ENCODE measurements at regions of chr7 and their contacts with region 1.

Region 1: DNA sequence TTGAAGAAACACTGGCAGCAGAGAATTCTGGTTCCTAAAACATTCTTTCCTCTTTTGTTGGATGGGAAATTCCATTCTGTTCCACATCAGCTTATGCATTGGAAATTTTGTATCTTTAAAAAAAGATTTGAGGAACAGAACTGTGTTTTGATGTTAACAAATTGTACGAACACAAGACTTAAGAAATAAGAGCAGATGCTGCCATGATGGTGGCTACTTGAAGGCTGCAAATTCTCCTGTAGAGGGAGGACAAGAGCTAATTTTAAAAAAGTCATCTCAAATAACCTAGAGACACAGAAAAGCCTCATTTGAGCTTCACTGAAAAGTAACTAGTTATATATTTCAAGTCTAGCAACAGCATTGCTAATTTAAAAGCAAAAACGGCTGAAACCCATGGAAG is 29.8 kb downstream of the NDUFB2 start:
- DNase-seq: no peak
- H3K4me3 Mint-ChIP-seq: no peak overlapping the region
- H3K27ac Mint-ChIP-seq: no peak overlapping the region
- H3K4me1 Mint-ChIP-seq: peaks cover 17% of the 10 kb centered on the region
- H3K27me3 Mint-ChIP-seq: no peaks in the 10 kb centered on the region

Region 2: DNA sequence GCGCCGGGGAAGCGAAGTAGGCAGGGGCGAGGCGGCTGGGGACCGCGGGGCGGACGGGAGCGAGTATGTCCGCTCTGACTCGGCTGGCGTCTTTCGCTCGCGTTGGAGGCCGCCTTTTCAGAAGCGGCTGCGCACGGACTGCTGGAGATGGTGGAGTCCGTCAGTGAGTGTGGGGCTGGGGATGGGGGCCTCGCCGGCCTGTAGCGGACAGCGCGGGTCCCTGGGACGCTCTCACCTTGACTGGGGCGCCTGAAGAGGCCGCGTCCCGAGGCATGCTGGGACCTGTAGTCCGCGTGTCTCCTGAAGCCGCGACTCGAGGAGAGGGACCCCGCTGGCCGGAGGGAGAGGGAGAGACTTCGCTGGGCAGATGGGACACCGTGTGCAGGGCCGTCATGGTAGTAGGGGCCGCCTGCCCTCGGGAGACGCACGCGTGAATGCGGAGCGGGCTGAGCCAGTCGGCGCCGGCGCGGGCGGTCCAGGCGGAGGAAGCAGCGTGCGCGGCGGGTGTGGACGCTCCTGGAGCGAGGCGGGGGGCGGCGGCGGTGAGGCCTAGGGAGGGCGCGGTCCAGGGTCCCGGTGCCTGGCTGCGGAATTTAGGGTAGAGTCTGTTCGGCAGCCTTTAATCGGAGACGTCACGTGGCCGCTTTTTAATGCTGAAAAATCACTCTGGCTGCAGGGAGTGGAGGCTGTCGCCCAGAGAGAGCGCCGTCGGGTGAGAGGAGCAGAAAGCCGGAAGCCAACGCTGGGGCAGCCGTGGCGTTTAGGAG is 29.4 kb before region 1 on chr7 and contains the start of gene NDUFB2:
- CTCF ChIA-PET with region 1: interaction called, 3 read pairs
- intact Hi-C with region 1: loop called (anchors 1 kb)
- DNase-seq: peak; percentile 75
- H3K4me3 Mint-ChIP-seq: peak within 1 kb of the TSS; percentile 98
- H3K27ac Mint-ChIP-seq: peak within 1 kb of the TSS; percentile 99
- H3K4me1 Mint-ChIP-seq: peaks cover 34% of the 10 kb centered on the region
- H3K27me3 Mint-ChIP-seq: no peaks in the 10 kb centered on the region
- total RNA-seq, gene NDUFB2: 167 to 179 TPM

Region 3: DNA sequence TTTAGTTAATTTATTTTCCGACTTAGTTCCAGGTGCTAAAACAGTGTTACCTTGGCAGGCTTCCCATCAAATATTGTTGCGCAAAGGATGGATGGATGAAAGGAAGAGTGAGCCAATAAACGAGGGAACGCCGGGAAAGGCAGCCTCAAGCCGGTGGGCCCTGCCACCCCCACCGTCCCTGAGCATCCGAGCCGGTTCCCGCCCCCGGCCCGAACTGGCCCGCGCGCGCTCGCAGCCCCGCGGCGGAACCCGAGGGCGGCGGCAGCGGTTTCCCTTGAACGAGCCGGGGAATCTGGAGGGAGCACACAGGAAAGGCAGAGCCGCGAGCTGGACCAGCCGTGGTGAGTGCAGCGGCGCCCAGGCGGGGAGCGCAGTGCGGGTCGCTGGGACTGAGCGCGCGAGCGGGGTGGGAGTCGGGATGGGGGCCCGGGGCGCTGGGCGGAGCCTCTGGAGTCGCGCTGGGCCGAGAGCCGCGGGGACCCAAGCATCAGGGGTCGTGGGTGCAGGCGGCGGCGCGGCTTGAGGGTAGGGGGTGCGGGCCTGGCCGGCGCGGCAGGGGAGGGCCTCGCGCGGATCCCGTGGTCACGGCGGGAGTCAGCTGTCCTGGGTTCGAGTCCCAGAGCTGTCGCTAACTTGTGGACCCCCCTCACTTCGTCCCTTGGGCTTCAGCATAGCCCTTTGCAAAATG is 825.0 kb after region 1 on chr7 and contains the start of gene AGK:
- CTCF ChIA-PET with region 1: no interaction called
- intact Hi-C with region 1: loop called (anchors 10 kb)
- DNase-seq: peak; percentile 83
- H3K4me3 Mint-ChIP-seq: peak within 1 kb of the TSS; percentile 86
- H3K27ac Mint-ChIP-seq: peak within 1 kb of the TSS; percentile 85
- H3K4me1 Mint-ChIP-seq: peaks cover 36% of the 10 kb centered on the region
- H3K27me3 Mint-ChIP-seq: no peaks in the 10 kb centered on the region
- total RNA-seq, gene AGK: 35.8 to 37.9 TPM

Measured in activated naive CD4-positive, alpha-beta T cell treated with anti-CD3 and anti-CD28 coated beads for 36 hours (primary cell).